ENCODE measurements at regions of chr7 and their contacts with region 1.

Region 1: GRCh38 chr7:32846701-32847100 is 44.9 kb downstream of the KBTBD2 start:
- DNase-seq: no peak
- H3K4me3 ChIP-seq: no peak overlapping the region
- CTCF ChIP-seq: peak; percentile 75

Region 2: DNA sequence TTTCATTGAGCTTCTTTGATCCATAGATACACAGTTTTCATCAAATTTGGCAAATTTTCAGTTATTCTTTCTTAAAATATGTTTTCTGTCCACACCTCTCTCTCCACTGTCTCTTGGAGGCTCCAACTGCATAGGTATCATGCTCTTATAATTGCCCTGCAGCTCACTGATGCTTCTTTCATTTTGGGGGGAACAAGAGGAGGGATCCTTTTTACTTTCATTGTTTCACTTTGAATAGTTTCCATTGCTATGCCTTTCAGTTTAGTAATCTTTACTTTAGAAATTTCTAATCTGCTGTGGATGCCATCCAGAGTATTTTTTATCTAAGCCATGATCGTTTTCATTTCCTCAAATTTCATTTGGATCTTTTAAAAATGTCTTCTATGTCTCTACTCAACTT is 11.9 kb after region 1 on chr7:
- CTCF ChIA-PET with region 1: interaction called, 28 read pairs
- POLR2A ChIA-PET with region 1: no interaction called
- DNase-seq: no peak
- H3K4me3 ChIP-seq: no peak overlapping the region
- CTCF ChIP-seq: no peak

Region 3: DNA sequence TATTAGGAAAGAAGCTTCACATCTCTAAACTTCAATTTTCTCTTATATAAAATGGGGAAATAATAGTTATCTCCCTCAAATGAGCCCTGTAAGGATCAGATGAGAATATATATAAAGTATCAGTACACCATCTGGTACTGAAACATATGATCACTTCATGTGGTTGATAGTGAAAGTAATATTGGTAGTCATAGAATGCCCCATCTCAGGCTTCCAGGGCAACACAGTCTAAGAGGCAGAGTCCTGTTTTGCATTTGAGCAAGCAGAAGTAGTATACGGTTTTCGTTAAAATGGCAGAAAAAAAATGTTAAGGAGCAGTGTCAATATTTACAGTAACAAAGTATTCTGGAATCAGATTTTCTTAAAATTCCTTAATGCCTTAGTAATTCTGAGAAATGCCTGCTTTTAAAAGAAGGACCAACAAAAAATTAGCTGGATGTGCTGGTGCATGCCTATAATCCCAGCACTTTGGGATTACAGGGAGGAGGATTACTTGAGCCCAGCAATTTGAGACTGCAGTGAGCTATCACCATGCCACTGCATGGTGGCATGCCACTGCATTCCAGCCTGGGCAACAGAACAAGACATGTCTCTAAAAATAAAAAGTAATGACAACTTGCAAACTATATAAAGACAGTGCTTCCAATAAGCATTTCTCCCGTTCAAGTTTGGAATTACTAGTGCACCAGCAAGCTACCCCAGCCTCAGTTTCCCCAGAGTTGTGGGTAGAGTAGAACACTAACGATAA is 25.1 kb after region 1 on chr7:
- CTCF ChIA-PET with region 1: interaction called, 30 read pairs
- POLR2A ChIA-PET with region 1: no interaction called
- DNase-seq: no peak
- H3K4me3 ChIP-seq: no peak overlapping the region
- CTCF ChIP-seq: no peak

Region 4: GRCh38 chr7:32891043-32891799 is 44.5 kb after region 1 on chr7 and contains the start of gene KBTBD2:
- CTCF ChIA-PET with region 1: interaction called, 13 read pairs
- POLR2A ChIA-PET with region 1: no interaction called
- DNase-seq: no peak
- H3K4me3 ChIP-seq: peak within 1 kb of the TSS; percentile 83
- CTCF ChIP-seq: peak; percentile 25

Region 5: DNA sequence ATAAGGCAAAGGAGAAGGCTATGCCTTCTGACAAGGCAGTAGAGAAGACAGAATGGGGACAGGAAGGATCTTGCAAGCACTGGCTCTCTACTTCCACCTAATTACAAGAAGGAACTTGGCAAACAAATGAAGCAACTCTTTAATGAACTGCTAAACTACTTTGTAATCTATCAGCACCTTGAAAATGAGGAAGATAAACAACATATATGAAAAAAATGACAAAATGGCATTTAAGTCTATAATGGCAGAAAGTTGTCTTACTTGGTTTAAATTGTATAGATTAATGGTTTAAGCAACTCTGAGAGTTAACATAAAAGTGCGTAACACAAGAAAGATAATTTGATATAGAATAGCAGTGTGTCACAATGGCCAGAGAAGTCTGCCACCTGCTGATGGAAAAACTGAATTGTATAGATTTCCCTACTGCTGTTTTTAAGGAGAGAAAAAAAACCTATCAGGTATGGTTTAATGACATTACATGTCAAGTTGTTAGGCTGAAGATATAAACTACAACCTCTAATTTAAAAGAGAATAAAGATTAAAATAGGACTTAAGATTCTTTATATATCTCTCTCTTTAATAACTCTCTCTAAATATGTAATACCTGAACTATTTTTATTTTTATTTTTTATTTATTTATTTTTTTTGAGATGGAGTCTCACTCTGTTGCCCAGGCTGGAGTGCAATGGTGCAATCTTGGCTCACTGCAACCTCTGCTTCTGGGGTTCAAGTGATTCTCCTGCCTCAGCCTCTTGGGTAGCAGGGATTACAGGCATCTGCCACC is 204.0 kb after region 1 on chr7:
- CTCF ChIA-PET with region 1: interaction called, 23 read pairs
- POLR2A ChIA-PET with region 1: no interaction called
- DNase-seq: no peak
- H3K4me3 ChIP-seq: no peak overlapping the region
- CTCF ChIP-seq: peak; percentile 36